Activated CD4-positive, alpha-beta memory T cell treated with anti-CD3 and anti-CD28 coated beads for 36 hours (primary cell): ENCODE measurements at regions of chr10 and their contacts with region 1.

Region 1: DNA sequence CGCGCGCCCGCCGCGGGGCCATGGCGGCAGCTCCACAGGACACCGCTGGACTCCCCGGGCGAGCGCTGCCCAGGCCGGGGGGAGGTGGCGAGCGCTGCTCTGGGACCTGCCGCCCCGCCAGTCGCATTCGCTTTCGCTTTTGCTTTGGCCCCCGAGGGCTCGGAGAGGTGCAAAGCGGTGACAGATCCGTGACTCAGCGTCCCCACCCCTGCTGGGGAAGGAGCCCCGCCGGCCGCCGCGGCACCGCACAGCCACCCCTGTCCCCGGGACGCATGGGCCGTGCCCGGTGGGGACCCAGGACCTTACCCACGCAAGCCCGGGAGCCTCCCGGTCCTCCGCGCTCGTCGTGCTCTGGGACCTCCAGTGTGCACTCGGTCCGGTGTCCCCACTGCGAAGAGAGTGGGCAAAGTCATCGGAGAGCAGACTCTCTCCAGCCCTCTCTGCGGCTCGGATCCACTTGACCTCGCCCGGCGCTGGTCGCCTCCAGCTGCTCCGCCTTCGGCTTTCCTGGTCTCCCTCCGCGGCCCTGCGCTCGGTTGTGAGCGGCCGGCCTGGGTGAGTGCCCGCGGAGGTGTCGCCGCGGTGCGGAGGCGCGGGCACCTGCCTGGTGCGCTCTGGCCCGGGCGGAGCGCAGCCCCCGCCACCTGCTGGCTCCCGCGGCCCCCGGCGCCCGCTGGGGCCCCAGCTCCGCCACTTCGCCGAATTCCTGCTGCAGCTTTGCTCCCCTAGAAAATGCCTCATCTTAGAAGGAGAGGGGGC is at the start of gene IL15RA:
- DNase-seq: peak; percentile 93
- H3K4me3 Mint-ChIP-seq: peak within 1 kb of the TSS; percentile 91
- H3K27ac Mint-ChIP-seq: peak within 1 kb of the TSS; percentile 93
- H3K4me1 Mint-ChIP-seq: peaks cover 30% of the 10 kb centered on the region
- H3K27me3 Mint-ChIP-seq: no peaks in the 10 kb centered on the region
- total RNA-seq, gene IL15RA: 20.1 to 20.2 TPM

Region 2: DNA sequence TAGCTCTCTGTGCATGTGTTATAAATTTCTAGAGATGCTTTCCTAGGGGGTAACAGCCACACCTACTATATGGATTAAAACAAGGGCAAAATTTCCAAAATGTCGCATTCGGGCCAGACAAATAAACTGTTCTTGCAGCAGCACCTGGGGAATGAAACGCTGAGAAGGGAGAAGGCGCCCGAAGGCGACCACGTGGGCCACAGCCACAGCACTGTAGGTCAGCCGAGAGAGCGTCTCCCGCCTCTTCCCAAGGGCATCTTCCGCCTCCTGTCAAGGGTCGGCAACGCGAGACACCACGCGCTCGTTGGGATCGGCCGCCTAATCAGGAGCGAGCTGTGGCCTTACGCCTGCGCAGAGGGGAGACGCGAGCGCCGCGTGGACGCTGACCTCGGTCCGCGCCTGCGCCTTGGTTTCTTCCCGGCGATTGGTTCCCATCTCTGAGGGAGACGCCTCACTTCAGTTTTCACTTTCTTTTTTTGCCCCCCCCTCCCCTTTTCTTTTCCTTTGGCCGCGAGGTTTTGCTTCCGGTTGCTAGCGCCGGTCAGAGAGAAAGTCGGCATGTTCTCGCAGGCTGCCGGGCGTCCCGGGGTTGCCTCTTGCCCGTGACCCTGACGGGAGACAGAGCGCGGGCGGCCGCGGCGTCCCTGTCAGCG is 293.2 kb before region 1 on chr10 and contains the start of gene TASOR2:
- CTCF ChIA-PET with region 1: no interaction called
- POLR2A ChIA-PET with region 1: no interaction called
- intact Hi-C with region 1: loop called (anchors 5 kb)
- DNase-seq: peak; percentile 98
- H3K4me3 Mint-ChIP-seq: peak within 1 kb of the TSS; percentile 98
- H3K27ac Mint-ChIP-seq: peak within 1 kb of the TSS; percentile 94
- H3K4me1 Mint-ChIP-seq: peaks cover 56% of the 10 kb centered on the region
- H3K27me3 Mint-ChIP-seq: peaks cover 3% of the 10 kb centered on the region
- total RNA-seq, gene TASOR2: 41.8 to 43.8 TPM

Region 3: GRCh38 chr10:5698062-5698461 is 279.6 kb before region 1 on chr10:
- CTCF ChIA-PET with region 1: no interaction called
- POLR2A ChIA-PET with region 1: no interaction called
- intact Hi-C with region 1: no loop called
- DNase-seq: no peak
- H3K4me3 Mint-ChIP-seq: no peak overlapping the region
- H3K27ac Mint-ChIP-seq: no peak overlapping the region
- H3K4me1 Mint-ChIP-seq: peaks cover 48% of the 10 kb centered on the region
- H3K27me3 Mint-ChIP-seq: no peaks in the 10 kb centered on the region

Region 4: DNA sequence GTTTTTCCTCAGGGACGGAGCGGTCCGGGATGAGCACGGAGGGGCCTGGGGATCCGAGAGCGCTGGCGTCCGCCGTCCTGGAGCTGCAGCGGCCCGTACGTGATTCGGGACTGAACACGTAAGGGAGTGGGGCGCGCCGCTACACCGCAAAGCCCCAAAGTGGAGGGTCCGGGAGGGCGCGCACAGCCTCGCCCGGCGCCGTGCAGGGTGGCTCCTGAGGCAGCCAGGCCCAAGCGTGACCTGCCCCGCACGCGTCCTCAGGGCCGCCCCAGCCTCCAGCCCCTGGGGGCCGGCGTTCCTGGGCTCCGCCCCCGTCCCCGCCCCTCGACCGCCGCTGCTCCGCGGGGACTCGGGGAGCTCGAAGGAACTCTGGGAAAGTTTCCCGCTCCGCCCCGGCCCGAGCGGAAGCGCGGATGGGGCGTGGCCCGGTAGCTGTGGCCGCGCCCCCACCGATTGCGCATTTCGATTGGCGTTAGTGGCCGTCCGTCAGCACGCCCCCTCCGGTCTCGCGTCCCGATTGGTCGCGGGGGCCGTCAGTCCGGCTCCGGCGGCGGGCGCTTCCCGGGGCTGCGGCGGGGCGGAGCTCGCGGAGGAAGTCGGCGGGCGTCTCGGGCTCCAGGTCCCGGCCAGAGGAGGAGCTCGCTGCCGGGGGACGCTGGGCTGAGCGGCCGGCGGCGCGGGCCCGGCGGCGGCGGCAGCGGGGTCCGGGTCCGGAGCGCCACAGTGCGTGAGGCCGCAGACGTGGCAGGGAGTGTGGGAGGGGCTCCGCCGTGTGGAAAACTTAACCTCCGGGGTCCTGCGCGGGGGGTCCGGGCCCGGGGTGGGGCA is 87.8 kb before region 1 on chr10 and contains the starts of genes ANKRD16 and FBH1:
- CTCF ChIA-PET with region 1: interaction called, 7 read pairs
- POLR2A ChIA-PET with region 1: interaction called, 11 read pairs
- intact Hi-C with region 1: loop called (anchors 2 kb)
- DNase-seq: peak; percentile 98
- H3K4me3 Mint-ChIP-seq: peak within 1 kb of the TSS; percentile 93
- H3K27ac Mint-ChIP-seq: peak within 1 kb of the TSS; percentile 80
- H3K4me1 Mint-ChIP-seq: peaks cover 50% of the 10 kb centered on the region
- H3K27me3 Mint-ChIP-seq: no peaks in the 10 kb centered on the region
- total RNA-seq, gene ANKRD16: 5.9 to 6.4 TPM
- total RNA-seq, gene FBH1: 57.8 to 63.4 TPM

Region 5: GRCh38 chr10:6014241-6014761 is 36.7 kb after region 1 on chr10:
- CTCF ChIA-PET with region 1: interaction called, 11 read pairs
- POLR2A ChIA-PET with region 1: interaction called, 3 read pairs
- intact Hi-C with region 1: loop called (anchors 2 kb)
- DNase-seq: peak; percentile 67
- H3K4me3 Mint-ChIP-seq: no peak overlapping the region
- H3K27ac Mint-ChIP-seq: peak overlapping the region; percentile 90
- H3K4me1 Mint-ChIP-seq: peaks cover 69% of the 10 kb centered on the region
- H3K27me3 Mint-ChIP-seq: no peaks in the 10 kb centered on the region

Region 6: GRCh38 chr10:6088721-6089390 is 111.2 kb after region 1 on chr10 and contains the start of gene RBM17:
- CTCF ChIA-PET with region 1: interaction called, 7 read pairs
- POLR2A ChIA-PET with region 1: interaction called, 9 read pairs
- intact Hi-C with region 1: loop called (anchors 1 kb)
- DNase-seq: peak; percentile 98
- H3K4me3 Mint-ChIP-seq: peak within 1 kb of the TSS; percentile 90
- H3K27ac Mint-ChIP-seq: peak within 1 kb of the TSS; percentile 83
- H3K4me1 Mint-ChIP-seq: peaks cover 71% of the 10 kb centered on the region
- H3K27me3 Mint-ChIP-seq: no peaks in the 10 kb centered on the region
- total RNA-seq, gene RBM17: 151 to 155 TPM

Region 7: DNA sequence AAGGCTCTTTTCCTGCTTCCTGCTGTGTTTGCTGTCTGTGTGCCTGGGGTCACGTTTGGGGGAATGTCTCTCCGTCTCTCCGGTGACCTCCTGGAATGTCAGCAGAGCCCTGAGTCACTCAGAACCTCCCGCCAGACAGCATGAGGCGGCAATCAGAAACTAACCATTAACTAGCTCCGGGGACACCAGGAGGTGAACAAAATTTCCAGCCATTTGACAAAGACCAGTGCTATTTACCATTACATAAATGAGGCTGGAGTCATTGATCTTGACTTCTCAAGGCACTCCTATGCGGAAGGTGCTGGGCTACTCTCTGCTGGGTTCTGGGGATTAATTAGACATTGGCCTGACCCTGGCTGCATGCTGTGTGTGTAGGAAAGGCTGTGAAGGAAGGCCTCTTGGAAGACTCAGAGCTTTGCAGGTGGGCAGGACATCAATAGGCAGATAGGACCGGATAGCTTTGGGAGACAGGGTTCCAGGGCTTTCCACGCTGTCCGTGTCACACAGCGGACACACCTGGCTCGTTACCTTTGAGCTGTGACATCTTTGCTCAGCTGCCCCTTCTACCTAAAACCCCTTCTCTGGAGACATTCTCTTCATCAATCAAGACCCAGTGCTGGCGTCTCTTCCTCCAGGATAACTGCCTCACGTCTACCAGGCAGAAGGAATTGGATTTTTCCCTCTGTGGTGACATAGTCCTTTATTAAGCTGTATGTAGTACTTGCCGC is 302.1 kb after region 1 on chr10:
- CTCF ChIA-PET with region 1: no interaction called
- POLR2A ChIA-PET with region 1: no interaction called
- intact Hi-C with region 1: no loop called
- DNase-seq: no peak
- H3K4me3 Mint-ChIP-seq: no peak overlapping the region
- H3K27ac Mint-ChIP-seq: no peak overlapping the region
- H3K4me1 Mint-ChIP-seq: peaks cover 40% of the 10 kb centered on the region
- H3K27me3 Mint-ChIP-seq: no peaks in the 10 kb centered on the region